RWPE1 (cell line): ENCODE measurements at regions of chr2 and their contacts with region 1.

Region 1: GRCh38 chr2:73243884-73244570 is 9.9 kb downstream of the CCT7 start:
- DNase-seq: peak; percentile 81
- H3K27ac ChIP-seq: peak overlapping the region; percentile 68
- CTCF ChIP-seq: no peak

Region 2: DNA sequence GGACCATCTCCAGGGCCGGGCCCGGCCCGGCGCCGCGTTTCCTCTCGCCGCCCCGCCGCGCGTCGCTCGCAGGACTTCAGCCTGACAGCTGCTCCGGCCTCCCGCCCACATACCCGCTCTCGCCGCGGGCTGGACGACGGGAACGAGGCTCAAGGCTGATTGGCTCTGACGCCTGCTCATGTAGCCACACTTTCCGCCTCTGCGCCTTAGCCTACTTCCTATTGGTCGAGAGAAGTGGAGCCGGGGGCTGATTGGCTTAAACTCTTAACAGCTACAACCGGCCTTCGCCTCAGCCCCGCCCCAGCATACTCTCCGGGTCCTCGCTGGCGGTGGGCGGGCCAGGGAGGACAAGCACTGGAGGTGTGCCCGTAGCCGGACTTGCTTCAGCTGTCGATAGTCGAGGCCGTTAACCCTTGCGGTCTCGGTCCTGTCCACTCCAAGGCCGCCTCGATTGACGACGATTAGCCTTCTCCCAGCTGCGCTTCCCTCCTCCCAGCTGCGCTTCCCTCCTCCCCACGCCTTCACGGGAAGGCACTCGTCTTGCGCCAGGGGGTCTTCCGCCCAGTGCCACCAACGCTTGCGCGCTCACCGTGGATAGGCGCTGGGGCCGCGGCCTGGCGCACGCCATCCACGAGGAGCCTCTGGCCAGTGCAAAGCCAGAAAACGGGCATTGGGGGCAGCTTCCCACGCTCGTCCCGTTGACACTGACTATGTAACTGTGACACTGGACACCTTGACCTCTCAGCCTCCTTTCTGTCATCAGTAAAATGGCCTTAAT is 10.7 kb before region 1 on chr2 and contains the start of gene PRADC1:
- CTCF ChIA-PET with region 1: no interaction called
- POLR2A ChIA-PET with region 1: interaction called, 12 read pairs
- DNase-seq: peak; percentile 99
- H3K27ac ChIP-seq: peak within 1 kb of the TSS; percentile 89
- CTCF ChIP-seq: no peak